PC-9 (cell line): ENCODE measurements at regions of chr10 and their contacts with region 1.

Region 1: GRCh38 chr10:102151774-102152544 is at the start of gene NOLC1:
- DNase-seq: peak; percentile 92 to 95
- H3K4me3 ChIP-seq: peak within 1 kb of the TSS; percentile 76
- H3K27ac ChIP-seq: peak within 1 kb of the TSS; percentile 98
- H3K4me1 ChIP-seq: peaks cover 32% of the 10 kb centered on the region
- H3K27me3 ChIP-seq: no peaks in the 10 kb centered on the region
- CTCF ChIP-seq: no peak
- total RNA-seq, gene NOLC1: 58.3 and 59.5 TPM in 2 replicates

Region 2: DNA sequence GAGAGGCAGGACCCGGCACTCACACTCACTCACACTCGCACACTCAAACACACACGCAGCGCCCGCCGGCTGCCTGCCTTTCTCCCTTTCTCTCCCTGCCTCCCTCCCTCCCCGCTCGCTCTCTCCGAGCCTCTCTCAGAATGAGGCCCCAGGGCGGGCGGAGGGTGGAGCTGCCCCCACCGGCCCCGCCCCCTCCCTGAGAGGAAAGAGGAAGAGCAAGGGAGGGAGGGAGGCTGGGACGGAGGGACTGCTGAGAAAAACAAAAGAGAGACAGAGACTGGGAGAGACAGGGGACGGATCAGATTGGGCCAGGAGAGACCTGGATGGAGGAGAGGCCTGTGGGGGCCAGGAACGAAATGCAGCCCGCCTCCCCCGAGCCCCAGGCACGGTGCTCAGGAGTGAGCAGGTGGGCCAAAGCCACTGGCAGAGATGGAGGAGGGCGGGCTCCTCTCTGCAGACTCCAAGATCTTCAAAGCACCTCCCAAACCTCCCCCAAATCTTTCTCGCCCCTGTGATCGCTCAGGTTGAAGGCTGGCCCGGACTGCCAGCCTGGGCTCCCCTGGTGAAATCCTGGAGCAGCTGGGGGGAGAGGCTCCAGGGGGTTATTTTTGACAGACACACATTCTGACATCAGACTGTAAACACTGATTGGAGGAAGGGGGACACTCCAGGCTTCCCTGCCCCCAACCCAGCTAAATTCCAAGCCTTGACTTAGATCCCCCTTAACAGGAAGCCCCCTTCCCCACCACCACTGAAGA is 36.9 kb before region 1 on chr10:
- CTCF ChIA-PET with region 1: no interaction called
- POLR2A ChIA-PET with region 1: no interaction called
- intact Hi-C with region 1: loop called (anchors 2 kb)
- DNase-seq: peak; percentile 39 to 66
- H3K4me3 ChIP-seq: peak overlapping the region; percentile 66; the same call in 1 of the 2 replicates
- H3K27ac ChIP-seq: no peak overlapping the region
- H3K4me1 ChIP-seq: no peaks in the 10 kb centered on the region; the same call in none of the 2 replicates
- H3K27me3 ChIP-seq: no peaks in the 10 kb centered on the region
- CTCF ChIP-seq: no peak

Region 3: GRCh38 chr10:102132563-102133372 is 19.2 kb before region 1 on chr10 and contains the start of gene PPRC1:
- CTCF ChIA-PET with region 1: no interaction called
- POLR2A ChIA-PET with region 1: interaction called, 5 read pairs
- intact Hi-C with region 1: loop called (anchors 1 kb)
- DNase-seq: peak; percentile 91 to 92
- H3K4me3 ChIP-seq: peak within 1 kb of the TSS; percentile 87
- H3K27ac ChIP-seq: peak within 1 kb of the TSS; percentile 89
- H3K4me1 ChIP-seq: peaks cover 26% of the 10 kb centered on the region
- H3K27me3 ChIP-seq: no peaks in the 10 kb centered on the region
- CTCF ChIP-seq: peak; percentile 83
- total RNA-seq, gene PPRC1: 22.9 and 25.1 TPM in 2 replicates

Region 4: DNA sequence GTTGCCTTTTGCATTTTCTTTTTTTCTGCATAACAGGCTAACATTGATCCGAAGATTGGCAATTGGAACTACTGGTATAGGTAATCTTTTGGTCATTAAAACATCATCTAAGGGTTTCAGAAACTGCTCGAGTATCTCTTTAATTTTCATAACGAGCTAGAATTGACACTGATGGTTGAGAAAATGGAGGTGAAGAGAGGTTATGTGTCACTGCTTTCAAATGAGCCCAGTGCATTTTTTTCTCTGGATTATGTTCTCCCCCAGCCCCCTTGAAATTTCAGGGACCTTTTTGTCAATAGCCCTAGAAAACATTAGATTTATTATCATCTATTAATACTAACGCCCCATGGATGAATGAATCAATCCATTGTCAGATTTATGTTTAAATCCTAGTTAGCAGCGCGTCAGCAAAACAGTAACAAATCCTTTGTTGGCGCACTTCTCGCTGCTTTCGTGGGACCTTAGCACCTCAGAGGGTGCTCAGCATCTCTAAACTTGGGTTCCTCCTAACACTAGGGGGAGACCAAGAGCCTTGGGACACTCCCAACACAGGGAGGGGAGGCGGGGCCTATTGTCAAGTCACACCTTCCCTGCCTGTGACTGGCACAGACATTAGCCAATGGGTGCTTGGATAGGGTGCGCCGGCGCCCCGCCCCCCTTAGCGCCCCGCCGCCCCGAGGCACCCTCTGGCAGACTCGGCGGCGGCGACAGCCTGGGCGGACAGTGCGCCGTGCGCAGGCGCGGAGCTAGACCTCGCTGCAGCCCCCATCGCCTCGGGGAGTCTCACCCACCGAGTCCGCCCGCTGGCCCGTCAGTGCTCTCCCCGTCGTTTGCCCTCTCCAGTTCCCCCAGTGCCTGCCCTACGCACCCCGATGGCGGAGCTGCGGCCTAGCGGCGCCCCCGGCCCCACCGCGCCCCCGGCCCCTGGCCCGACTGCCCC is 351.6 kb after region 1 on chr10 and contains the start of gene SUFU:
- CTCF ChIA-PET with region 1: no interaction called
- POLR2A ChIA-PET with region 1: interaction called, 3 read pairs
- intact Hi-C with region 1: loop called (anchors 10 kb)
- DNase-seq: peak; percentile 85 to 88
- H3K4me3 ChIP-seq: peak within 1 kb of the TSS; percentile 74
- H3K27ac ChIP-seq: no peak within 1 kb of the TSS
- H3K4me1 ChIP-seq: peaks cover 34% of the 10 kb centered on the region
- H3K27me3 ChIP-seq: no peaks in the 10 kb centered on the region
- CTCF ChIP-seq: peak; percentile 79
- total RNA-seq, gene SUFU: 16.9 and 20.2 TPM in 2 replicates